Sciatic nerve (tissue), 2 donors: ENCODE measurements at regions of chr4 and their contacts with region 1.

Region 1: DNA sequence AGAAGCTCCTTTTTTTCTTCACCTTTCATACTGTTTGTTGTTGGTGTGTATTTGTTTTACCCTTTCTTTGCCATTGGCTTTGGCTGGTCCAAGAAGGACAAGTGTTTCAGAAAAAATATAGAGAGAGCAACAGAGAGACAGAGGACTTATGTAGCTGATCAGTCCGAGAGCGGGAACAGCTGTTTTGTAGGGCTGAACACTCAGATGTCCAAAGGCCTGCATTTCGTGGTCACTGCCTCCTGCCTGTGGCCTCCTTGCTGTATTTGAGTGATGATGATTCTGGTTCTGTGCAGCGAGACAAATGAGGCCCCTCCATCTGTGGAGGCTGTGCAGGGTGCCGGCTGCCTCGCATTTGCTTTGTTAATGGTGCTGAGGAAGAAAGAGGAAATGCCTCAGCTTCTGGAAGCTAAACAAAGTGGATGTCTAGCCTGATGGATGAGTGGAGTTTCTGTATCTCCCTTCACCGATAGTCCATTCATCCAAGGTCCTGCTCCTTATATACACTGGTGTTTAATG is 19.8 kb upstream of the STOX2 start:
- DNase-seq: no peak
- ATAC-seq: no peak

Region 2: GRCh38 chr4:183905081-183905592 is 19.9 kb after region 1 on chr4 and contains the start of gene STOX2:
- intact Hi-C with region 1: loop called (anchors 2 kb)
- DNase-seq: peak; percentile 77
- ATAC-seq: peak; percentile 89
- total RNA-seq, gene STOX2: 19.2 TPM

Region 3: GRCh38 chr4:184280591-184281071 is 395.4 kb after region 1 on chr4:
- intact Hi-C with region 1: no loop called
- DNase-seq: no peak
- ATAC-seq: no peak